PC-3 (cell line): ENCODE measurements at regions of chr3 and their contacts with region 1.

Region 1: GRCh38 chr3:128969993-128970739 is 23.7 kb downstream of the CFAP92 start:
- DNase-seq: peak; percentile 50
- ATAC-seq: no peak
- H3K4me3 ChIP-seq: no peak overlapping the region
- H3K27ac ChIP-seq: no peak overlapping the region
- H3K4me1 ChIP-seq: 0 out of 2 replicates have a peak, but pooled peaks cover 10% of the 10 kb centered on the region
- H3K27me3 ChIP-seq: no peaks in the 10 kb centered on the region
- CTCF ChIP-seq: peak; percentile 86

Region 2: GRCh38 chr3:128701342-128702212 is 268.6 kb before region 1 on chr3:
- CTCF ChIA-PET with region 1: no interaction called
- POLR2A ChIA-PET with region 1: no interaction called
- intact Hi-C with region 1: no loop called
- DNase-seq: no peak
- ATAC-seq: no peak
- H3K4me3 ChIP-seq: no peak overlapping the region
- H3K27ac ChIP-seq: no peak overlapping the region
- H3K4me1 ChIP-seq: no peaks in the 10 kb centered on the region
- H3K27me3 ChIP-seq: no peaks in the 10 kb centered on the region
- CTCF ChIP-seq: no peak

Region 3: GRCh38 chr3:128775912-128776542 is 194.1 kb before region 1 on chr3:
- CTCF ChIA-PET with region 1: no interaction called
- POLR2A ChIA-PET with region 1: no interaction called
- intact Hi-C with region 1: no loop called
- DNase-seq: peak; percentile 7
- ATAC-seq: peak; percentile 51
- H3K4me3 ChIP-seq: no peak overlapping the region
- H3K27ac ChIP-seq: no peak overlapping the region
- H3K4me1 ChIP-seq: no peaks in the 10 kb centered on the region
- H3K27me3 ChIP-seq: no peaks in the 10 kb centered on the region
- CTCF ChIP-seq: no peak

Region 4: DNA sequence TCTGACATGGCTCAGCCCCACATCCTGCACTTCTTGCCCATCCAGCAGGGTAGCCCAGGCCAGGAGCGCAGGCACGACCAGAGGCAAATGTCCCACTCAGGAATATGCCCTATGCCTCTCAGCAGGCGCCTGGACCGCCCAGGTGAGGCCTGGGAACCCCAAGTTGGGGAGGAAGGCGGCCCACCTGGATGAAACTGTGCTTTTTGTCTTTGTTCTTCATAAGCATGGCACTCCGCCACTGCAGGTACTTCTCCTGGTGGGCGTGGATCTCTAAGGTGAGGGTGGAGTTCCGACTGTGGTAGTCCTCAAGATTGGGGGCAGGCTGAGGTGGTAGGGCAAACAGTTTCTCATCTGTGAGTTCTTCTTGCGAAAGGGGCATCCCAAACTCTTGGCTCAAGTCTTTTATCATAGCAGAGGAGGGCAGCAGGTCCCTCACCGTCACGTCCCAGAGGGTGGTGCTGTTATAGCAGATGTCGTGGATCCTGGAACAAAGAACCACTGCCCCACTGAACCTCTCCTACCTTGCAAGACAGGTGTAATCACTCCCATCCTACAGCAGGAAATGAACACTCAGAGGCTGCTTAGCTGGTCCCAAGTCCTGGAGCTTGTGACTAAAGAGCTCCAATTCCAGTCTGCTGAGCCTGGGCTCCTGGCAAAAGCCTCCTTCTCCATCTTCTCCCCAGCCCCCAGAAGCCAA is 37.5 kb before region 1 on chr3:
- CTCF ChIA-PET with region 1: no interaction called
- POLR2A ChIA-PET with region 1: no interaction called
- intact Hi-C with region 1: no loop called
- DNase-seq: no peak
- ATAC-seq: no peak
- H3K4me3 ChIP-seq: no peak overlapping the region
- H3K27ac ChIP-seq: no peak overlapping the region
- H3K4me1 ChIP-seq: no peaks in the 10 kb centered on the region
- H3K27me3 ChIP-seq: no peaks in the 10 kb centered on the region
- CTCF ChIP-seq: no peak

Region 5: GRCh38 chr3:129016356-129016719 is 46.2 kb after region 1 on chr3:
- CTCF ChIA-PET with region 1: interaction called, 45 read pairs
- POLR2A ChIA-PET with region 1: no interaction called
- intact Hi-C with region 1: loop called (anchors 5 kb)
- DNase-seq: peak; percentile 30
- ATAC-seq: peak; percentile 72
- H3K4me3 ChIP-seq: no peak overlapping the region
- H3K27ac ChIP-seq: no peak overlapping the region
- H3K4me1 ChIP-seq: peaks cover 5% of the 10 kb centered on the region
- H3K27me3 ChIP-seq: no peaks in the 10 kb centered on the region
- CTCF ChIP-seq: no peak

Region 6: GRCh38 chr3:129023909-129024308 is 53.7 kb after region 1 on chr3:
- CTCF ChIA-PET with region 1: interaction called, 3 read pairs
- POLR2A ChIA-PET with region 1: no interaction called
- intact Hi-C with region 1: loop called (anchors 5 kb)
- DNase-seq: peak; percentile 53
- ATAC-seq: peak; percentile 65
- H3K4me3 ChIP-seq: no peak overlapping the region
- H3K27ac ChIP-seq: no peak overlapping the region
- H3K4me1 ChIP-seq: peaks cover 5% of the 10 kb centered on the region; the same call in 1 of the 2 replicates
- H3K27me3 ChIP-seq: no peaks in the 10 kb centered on the region
- CTCF ChIP-seq: peak; percentile 52

Region 7: DNA sequence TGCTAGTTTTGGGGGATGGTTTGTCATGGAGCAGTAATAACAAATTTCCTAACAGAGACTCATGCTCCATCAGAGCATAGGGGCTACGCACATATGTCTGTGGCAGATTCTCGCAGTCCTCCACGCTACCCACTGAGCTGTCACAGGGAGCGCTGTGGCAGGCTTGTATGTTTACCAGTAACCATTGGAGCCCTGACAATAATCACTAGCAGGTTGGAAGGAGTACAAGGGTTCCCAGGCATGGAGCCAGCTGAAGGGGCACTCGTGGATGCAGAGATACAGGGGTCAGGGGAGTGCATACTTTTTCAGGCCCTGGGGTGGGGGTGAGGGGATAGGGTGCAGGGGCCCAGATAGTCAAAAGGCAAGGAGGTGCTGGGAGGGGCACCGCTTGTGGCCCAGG is 82.5 kb after region 1 on chr3:
- CTCF ChIA-PET with region 1: interaction called, 15 read pairs
- POLR2A ChIA-PET with region 1: no interaction called
- intact Hi-C with region 1: no loop called
- DNase-seq: no peak
- ATAC-seq: no peak
- H3K4me3 ChIP-seq: no peak overlapping the region
- H3K27ac ChIP-seq: no peak overlapping the region
- H3K4me1 ChIP-seq: no peaks in the 10 kb centered on the region
- H3K27me3 ChIP-seq: no peaks in the 10 kb centered on the region
- CTCF ChIP-seq: no peak

Region 8: DNA sequence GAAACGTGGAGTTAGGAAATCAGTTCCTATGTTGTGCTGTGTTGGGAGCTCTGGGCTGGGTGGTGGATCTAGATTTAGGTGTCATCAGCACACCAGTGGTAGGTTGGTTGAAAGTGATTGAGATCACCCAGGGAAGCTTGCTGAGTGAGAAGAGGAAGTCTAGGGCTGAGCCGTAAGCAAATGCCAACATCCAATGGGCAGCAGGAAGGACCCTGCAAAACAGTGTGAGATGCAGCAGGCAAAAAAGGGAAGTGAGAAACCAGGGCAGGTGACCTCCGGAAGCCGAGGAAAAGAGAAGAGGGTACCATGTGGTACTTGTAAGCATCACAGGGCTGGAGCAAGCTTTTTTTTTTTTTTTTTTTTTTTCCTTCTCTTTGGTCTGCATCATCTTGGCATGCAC is 263.4 kb after region 1 on chr3:
- CTCF ChIA-PET with region 1: no interaction called
- POLR2A ChIA-PET with region 1: no interaction called
- intact Hi-C with region 1: no loop called
- DNase-seq: no peak
- ATAC-seq: no peak
- H3K4me3 ChIP-seq: no peak overlapping the region
- H3K27ac ChIP-seq: no peak overlapping the region
- H3K4me1 ChIP-seq: peaks cover 34% of the 10 kb centered on the region
- H3K27me3 ChIP-seq: no peaks in the 10 kb centered on the region
- CTCF ChIP-seq: no peak